ENCODE measurements at regions of chr1 and their contacts with region 1.

Region 1: DNA sequence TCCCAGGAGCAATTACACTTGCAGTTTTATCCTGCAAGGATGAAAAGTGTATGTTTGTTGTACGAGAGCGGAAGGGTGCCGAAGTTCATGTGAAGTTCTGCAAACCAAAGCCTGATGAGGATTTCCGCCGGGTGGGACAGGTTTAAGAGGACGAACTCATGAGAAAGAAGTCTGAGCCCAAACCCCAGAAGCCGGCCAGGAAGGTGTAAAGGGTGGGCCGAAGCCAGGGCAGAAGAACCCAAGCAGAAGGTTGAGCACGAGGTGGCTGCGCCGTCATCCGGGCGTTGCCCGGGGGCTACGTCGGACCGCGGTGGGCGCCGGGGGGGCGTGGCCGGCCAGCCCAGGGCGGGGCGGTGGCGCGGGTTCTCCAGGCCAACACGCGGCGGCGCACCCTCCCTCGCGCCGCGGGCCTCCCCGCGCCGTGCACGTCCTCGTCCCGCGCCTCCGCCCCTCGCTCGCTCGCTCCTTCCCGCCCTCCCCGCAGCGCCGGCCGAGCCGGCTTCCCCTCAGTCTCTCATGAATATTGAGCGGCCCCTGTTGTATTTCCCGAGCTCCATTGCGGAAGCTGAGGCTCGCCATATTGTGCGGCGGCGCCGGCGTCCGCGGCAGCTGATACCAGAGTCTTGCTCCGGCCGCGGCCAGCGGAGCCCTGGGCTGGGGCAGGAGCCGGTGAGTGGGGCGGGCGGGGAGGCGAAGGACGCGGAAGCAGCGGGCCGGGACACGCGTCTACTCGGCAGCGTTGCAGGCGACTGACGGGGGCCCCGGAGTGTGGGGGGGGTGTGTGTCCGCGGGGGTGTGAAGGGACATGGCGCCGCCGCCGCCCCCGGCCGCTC is at the start of gene RNF2:
- DNase-seq: peak; percentile 91
- CTCF ChIP-seq: no peak

Region 2: GRCh38 chr1:185681034-185681633 is 635.9 kb after region 1 on chr1:
- in situ Hi-C with region 1: loop called (anchors 25 kb)
- DNase-seq: no peak
- CTCF ChIP-seq: peak; percentile 67